ENCODE measurements at regions of chr4 and their contacts with region 1.

Region 1: DNA sequence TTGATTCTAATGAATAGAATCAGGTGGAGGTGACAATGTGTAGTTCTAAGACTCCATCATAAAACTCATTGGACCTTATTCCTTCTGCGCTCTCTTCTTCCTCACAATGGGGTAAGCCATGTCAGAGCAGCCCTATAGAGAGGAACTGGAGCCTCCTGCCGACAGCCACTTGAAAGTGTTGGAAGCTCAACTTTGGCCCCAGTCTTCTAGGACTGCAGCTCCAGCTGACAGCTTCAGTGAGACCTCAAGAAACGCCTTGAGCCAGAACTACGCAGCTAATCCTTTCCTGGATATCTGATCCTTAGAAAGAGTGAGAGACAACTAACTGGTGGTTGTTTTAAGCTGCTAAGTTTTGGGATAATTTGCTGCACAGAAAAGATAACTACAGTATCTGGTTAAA is 22.1 kb upstream of the ADH7 start:
- DNase-seq: no peak
- H3K4me3 Mint-ChIP-seq: no peak overlapping the region
- H3K27ac Mint-ChIP-seq: no peak overlapping the region
- H3K4me1 Mint-ChIP-seq: peaks cover 11% of the 10 kb centered on the region
- H3K27me3 Mint-ChIP-seq: no peaks in the 10 kb centered on the region
- CTCF ChIP-seq: no peak

Region 2: DNA sequence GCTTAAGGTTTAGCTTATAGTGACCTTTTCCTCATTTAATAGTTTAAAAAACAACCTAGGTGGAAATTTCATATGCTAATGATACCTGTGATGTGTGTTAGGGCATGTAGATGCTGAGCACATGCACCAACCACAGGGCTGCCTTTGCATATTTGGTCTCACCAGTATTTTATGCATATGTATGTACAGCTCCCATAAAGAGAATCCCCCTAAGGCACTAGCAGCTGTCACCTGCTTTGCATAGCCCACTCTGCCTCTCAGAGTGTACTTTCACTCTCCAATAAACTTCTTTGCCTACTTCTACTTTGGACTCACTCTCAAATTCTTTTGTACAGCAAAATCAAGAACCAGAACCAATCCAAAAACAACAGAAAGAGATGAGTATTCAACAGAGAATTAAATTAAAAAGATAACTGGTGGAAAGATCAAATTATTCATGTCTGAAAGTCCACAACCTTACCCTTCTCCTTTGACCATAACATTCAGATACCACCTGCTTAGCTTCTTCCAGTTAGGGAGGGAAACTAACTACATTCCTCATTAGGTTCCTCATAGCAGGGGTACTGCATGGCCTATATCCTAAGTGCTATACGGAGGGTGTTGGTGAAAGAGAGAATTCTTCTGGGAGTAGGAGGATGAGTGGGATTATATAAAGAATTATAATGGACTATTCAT is 1564.5 kb before region 1 on chr4:
- CTCF ChIA-PET with region 1: no interaction called
- POLR2A ChIA-PET with region 1: no interaction called
- intact Hi-C with region 1: no loop called
- DNase-seq: no peak
- H3K4me3 Mint-ChIP-seq: no peak overlapping the region
- H3K27ac Mint-ChIP-seq: no peak overlapping the region
- H3K4me1 Mint-ChIP-seq: no peaks in the 10 kb centered on the region
- H3K27me3 Mint-ChIP-seq: no peaks in the 10 kb centered on the region
- CTCF ChIP-seq: no peak

Region 3: DNA sequence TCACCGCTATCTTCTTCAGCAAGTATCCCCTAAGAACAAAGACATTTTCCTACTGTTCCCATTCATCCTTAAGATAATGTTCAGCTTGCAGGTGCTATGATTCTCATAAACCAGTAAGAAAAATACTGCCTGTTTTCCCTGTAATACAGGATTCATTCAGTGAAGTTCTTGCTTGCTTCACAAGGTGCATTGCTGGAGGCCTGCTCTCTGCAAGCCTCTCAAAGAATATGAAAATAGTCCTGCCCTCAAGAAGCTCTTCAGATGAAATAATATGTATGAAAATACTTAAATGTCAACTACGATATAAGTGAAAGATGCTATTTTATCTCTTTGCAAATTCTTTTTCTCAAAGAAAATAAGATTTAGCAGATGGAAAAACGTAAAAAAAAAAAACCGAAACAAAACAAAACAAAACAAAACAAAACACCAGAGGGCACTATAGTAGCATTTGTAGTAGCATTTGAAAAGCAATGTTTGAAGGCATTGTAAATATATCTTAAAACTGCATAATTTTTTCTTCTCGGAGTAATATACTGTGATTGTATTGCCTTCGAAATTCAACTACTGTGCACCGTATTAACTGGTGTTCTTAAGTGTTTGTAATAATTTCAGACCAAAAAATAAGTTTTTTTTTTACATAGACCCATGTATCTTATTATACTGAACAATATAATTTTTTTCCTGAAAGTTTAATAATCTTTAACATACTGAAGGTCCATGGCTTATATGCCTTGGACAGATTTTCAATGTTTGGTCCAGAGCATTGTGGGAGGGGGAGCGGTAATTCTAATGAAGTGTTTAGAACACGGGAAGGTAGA is 339.2 kb before region 1 on chr4:
- CTCF ChIA-PET with region 1: interaction called, 23 read pairs
- POLR2A ChIA-PET with region 1: no interaction called
- intact Hi-C with region 1: no loop called
- DNase-seq: peak; percentile 30
- H3K4me3 Mint-ChIP-seq: no peak overlapping the region
- H3K27ac Mint-ChIP-seq: no peak overlapping the region
- H3K4me1 Mint-ChIP-seq: no peaks in the 10 kb centered on the region
- H3K27me3 Mint-ChIP-seq: no peaks in the 10 kb centered on the region
- CTCF ChIP-seq: peak; percentile 25

Region 4: GRCh38 chr4:99414389-99414788 is 42.9 kb before region 1 on chr4:
- CTCF ChIA-PET with region 1: interaction called, 89 read pairs
- POLR2A ChIA-PET with region 1: interaction called, 8 read pairs
- intact Hi-C with region 1: no loop called
- DNase-seq: peak; percentile 87
- H3K4me3 Mint-ChIP-seq: no peak overlapping the region
- H3K27ac Mint-ChIP-seq: no peak overlapping the region
- H3K4me1 Mint-ChIP-seq: no peaks in the 10 kb centered on the region
- H3K27me3 Mint-ChIP-seq: no peaks in the 10 kb centered on the region
- CTCF ChIP-seq: no peak

Measured in MCF 10A (cell line).